Caco-2 (cell line): ENCODE measurements at regions of chr16 and their contacts with region 1.

Region 1: GRCh38 chr16:68528686-68529379 is 10.3 kb upstream of the ZFP90 start:
- DNase-seq: peak; percentile 88 to 94
- H3K4me3 ChIP-seq: peak overlapping the region; percentile 95
- H3K4me3 Mint-ChIP-seq: peak overlapping the region; percentile 83
- H3K27ac Mint-ChIP-seq: peak overlapping the region; percentile 86
- H3K4me1 ChIP-seq: no peaks in the 10 kb centered on the region
- H3K4me1 Mint-ChIP-seq: peaks cover 9% of the 10 kb centered on the region
- H3K27me3 ChIP-seq: no peaks in the 10 kb centered on the region
- H3K27me3 Mint-ChIP-seq: no peaks in the 10 kb centered on the region
- CTCF ChIP-seq: peak; percentile 98

Region 2: GRCh38 chr16:68538880-68539701 is 10.3 kb after region 1 on chr16 and contains the start of gene ZFP90:
- CTCF ChIA-PET with region 1: interaction called, 5 read pairs
- POLR2A ChIA-PET with region 1: no interaction called
- intact Hi-C with region 1: loop called (anchors 1 kb)
- DNase-seq: peak; percentile 89 to 94
- H3K4me3 ChIP-seq: peak within 1 kb of the TSS; percentile 76
- H3K4me3 Mint-ChIP-seq: peak within 1 kb of the TSS; percentile 91
- H3K27ac Mint-ChIP-seq: peak within 1 kb of the TSS; percentile 79
- H3K4me1 ChIP-seq: 0 out of 2 replicates have a peak, but pooled peaks cover 3% of the 10 kb centered on the region
- H3K4me1 Mint-ChIP-seq: peaks cover 6% of the 10 kb centered on the region
- H3K27me3 ChIP-seq: no peaks in the 10 kb centered on the region
- H3K27me3 Mint-ChIP-seq: no peaks in the 10 kb centered on the region
- CTCF ChIP-seq: no peak
- total RNA-seq, gene ZFP90: 16.5 and 23.2 TPM in 2 replicates

Region 3: DNA sequence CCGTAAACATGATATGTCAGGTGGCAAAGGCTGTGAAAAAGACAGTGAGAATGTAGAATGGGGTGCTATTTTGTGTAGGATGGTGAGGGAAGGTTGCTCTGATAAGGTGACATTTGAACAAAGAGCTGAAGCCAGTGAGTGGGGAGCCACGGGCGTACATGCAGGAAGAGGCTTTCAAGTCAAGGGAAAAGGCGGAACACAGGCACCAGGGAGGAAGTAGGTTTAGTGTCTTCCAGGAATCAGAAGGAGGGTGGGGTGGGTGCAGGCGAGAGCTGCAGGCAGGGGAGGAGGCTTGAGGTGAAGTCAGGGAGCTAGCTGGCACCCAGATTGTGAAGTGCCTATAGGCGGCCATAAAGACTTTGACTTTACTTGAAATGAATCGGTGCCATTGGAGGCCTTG is 24.4 kb after region 1 on chr16:
- CTCF ChIA-PET with region 1: no interaction called
- POLR2A ChIA-PET with region 1: no interaction called
- intact Hi-C with region 1: no loop called
- DNase-seq: no peak
- H3K4me3 ChIP-seq: no peak overlapping the region
- H3K4me3 Mint-ChIP-seq: no peak overlapping the region
- H3K27ac Mint-ChIP-seq: peak overlapping the region; percentile 24
- H3K4me1 ChIP-seq: no peaks in the 10 kb centered on the region
- H3K4me1 Mint-ChIP-seq: no peaks in the 10 kb centered on the region
- H3K27me3 ChIP-seq: no peaks in the 10 kb centered on the region
- H3K27me3 Mint-ChIP-seq: no peaks in the 10 kb centered on the region
- CTCF ChIP-seq: no peak

Region 4: GRCh38 chr16:68644715-68645493 is 116.1 kb after region 1 on chr16 and contains the start of gene CDH3:
- CTCF ChIA-PET with region 1: interaction called, 12 read pairs
- POLR2A ChIA-PET with region 1: no interaction called
- intact Hi-C with region 1: loop called (anchors 2 kb)
- DNase-seq: peak; percentile 93 to 95
- H3K4me3 ChIP-seq: peak within 1 kb of the TSS; percentile 97
- H3K4me3 Mint-ChIP-seq: peak within 1 kb of the TSS; percentile 90
- H3K27ac Mint-ChIP-seq: peak within 1 kb of the TSS; percentile 80
- H3K4me1 ChIP-seq: peaks cover 21% of the 10 kb centered on the region
- H3K4me1 Mint-ChIP-seq: peaks cover 19% of the 10 kb centered on the region
- H3K27me3 ChIP-seq: no peaks in the 10 kb centered on the region
- H3K27me3 Mint-ChIP-seq: no peaks in the 10 kb centered on the region
- CTCF ChIP-seq: peak in 1 of 2 experiments; percentile 33
- total RNA-seq, gene CDH3: 114 and 144 TPM in 2 replicates

Region 5: DNA sequence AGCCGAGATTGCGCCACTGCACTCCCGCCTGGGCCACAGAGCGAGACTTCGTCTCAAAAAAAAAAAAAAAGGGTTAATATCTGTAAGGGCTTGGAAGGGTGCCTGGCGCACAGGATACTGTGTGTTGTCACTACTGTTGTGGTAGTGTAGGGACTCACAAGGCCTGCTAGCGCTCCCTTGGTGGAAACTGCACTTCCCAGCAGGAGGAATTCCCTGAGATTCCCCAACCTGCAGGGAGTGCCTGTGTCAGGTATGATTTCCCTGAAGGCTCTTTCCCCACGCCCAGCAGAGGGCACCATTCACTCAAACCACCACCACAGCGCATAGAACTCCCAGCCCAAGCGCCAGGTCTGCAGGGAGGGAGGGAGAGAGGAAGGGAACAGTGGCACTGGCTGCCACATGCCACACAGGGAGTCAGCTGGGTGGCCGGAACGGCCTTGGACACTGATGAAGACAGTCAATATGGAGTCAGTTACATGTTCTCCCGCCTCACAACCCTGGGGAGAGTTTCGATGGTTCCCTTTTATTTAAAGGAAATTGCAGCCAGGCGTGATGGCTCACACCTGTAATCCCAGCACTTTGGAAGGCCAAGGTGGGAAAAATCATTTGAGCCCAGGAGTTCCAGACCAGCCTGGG is 175.5 kb after region 1 on chr16:
- CTCF ChIA-PET with region 1: interaction called, 8 read pairs
- POLR2A ChIA-PET with region 1: interaction called, 5 read pairs
- intact Hi-C with region 1: loop called (anchors 1 kb)
- DNase-seq: peak; percentile 93 to 94
- H3K4me3 ChIP-seq: no peak overlapping the region
- H3K4me3 Mint-ChIP-seq: no peak overlapping the region
- H3K27ac Mint-ChIP-seq: peak overlapping the region; percentile 49
- H3K4me1 ChIP-seq: peaks cover 19% of the 10 kb centered on the region
- H3K4me1 Mint-ChIP-seq: peaks cover 21% of the 10 kb centered on the region
- H3K27me3 ChIP-seq: no peaks in the 10 kb centered on the region
- H3K27me3 Mint-ChIP-seq: no peaks in the 10 kb centered on the region
- CTCF ChIP-seq: peak; percentile 92 to 97

Region 6: GRCh38 chr16:68800257-68800875 is 271.5 kb after region 1 on chr16:
- CTCF ChIA-PET with region 1: interaction called, 5 read pairs
- POLR2A ChIA-PET with region 1: no interaction called
- intact Hi-C with region 1: loop called (anchors 1 kb)
- DNase-seq: peak; percentile 83 to 88
- H3K4me3 ChIP-seq: no peak overlapping the region
- H3K4me3 Mint-ChIP-seq: no peak overlapping the region
- H3K27ac Mint-ChIP-seq: peak overlapping the region; percentile 7
- H3K4me1 ChIP-seq: peaks cover 62% of the 10 kb centered on the region
- H3K4me1 Mint-ChIP-seq: peaks cover 18% of the 10 kb centered on the region
- H3K27me3 ChIP-seq: no peaks in the 10 kb centered on the region
- H3K27me3 Mint-ChIP-seq: no peaks in the 10 kb centered on the region
- CTCF ChIP-seq: peak; percentile 85 to 86

Region 7: GRCh38 chr16:68902008-68902968 is 373.5 kb after region 1 on chr16:
- CTCF ChIA-PET with region 1: no interaction called
- POLR2A ChIA-PET with region 1: no interaction called
- intact Hi-C with region 1: loop called (anchors 1 kb)
- DNase-seq: peak; percentile 57 to 79
- H3K4me3 ChIP-seq: no peak overlapping the region
- H3K4me3 Mint-ChIP-seq: no peak overlapping the region
- H3K27ac Mint-ChIP-seq: peak overlapping the region; percentile 29
- H3K4me1 ChIP-seq: peaks cover 12% of the 10 kb centered on the region
- H3K4me1 Mint-ChIP-seq: peaks cover 14% of the 10 kb centered on the region
- H3K27me3 ChIP-seq: no peaks in the 10 kb centered on the region
- H3K27me3 Mint-ChIP-seq: no peaks in the 10 kb centered on the region
- CTCF ChIP-seq: peak; percentile 73 to 87